Endothelial cell of umbilical vein (primary cell): ENCODE measurements at regions of chr1 and their contacts with region 1.

Region 1: DNA sequence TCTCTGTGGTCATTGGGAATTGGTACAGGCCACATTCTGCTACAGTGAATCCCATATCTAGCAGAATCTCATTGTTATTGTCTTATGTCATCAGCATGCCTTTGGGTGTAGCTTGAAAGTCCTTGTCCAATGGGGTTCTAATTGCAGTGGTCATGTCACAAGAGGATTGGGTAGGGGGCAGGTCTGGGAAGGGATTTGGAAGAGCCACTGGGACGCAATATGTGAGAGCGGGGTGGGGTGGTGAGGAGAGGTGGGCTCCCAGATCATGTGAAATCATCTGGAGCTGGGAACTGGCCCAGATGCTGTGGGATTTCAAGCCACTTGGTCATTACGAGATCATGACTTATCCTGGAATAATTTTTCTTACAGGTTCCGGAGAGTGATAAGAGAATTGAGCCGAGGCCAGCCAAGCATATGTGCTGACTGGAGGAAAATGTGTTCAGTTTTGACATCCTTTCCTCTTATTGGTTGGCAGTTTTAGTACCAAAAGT is 16.3 kb downstream of the CNIH3 start:
- DNase-seq: peak; percentile 74
- H3K4me3 ChIP-seq: no peak overlapping the region
- H3K27ac ChIP-seq: peak overlapping the region; percentile 47
- H3K4me1 ChIP-seq: peaks cover 10% of the 10 kb centered on the region
- H3K27me3 ChIP-seq: no peaks in the 10 kb centered on the region
- CTCF ChIP-seq: no peak
- POLR2A ChIP-seq: no peak

Region 2: DNA sequence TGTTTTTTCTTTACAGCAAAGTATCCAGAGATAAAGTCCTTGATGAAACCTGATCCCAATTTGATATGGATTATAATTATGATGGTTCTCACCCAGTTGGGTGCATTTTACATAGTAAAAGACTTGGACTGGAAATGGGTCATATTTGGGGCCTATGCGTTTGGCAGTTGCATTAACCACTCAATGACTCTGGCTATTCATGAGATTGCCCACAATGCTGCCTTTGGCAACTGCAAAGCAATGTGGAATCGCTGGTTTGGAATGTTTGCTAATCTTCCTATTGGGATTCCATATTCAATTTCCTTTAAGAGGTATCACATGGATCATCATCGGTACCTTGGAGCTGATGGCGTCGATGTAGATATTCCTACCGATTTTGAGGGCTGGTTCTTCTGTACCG is 442.9 kb before region 1 on chr1:
- CTCF ChIA-PET with region 1: no interaction called
- POLR2A ChIA-PET with region 1: no interaction called
- dilution Hi-C with region 1: no loop called
- intact Hi-C with region 1: loop called (anchors 5 kb)
- DNase-seq: no peak
- H3K4me3 ChIP-seq: no peak overlapping the region
- H3K27ac ChIP-seq: no peak overlapping the region
- H3K4me1 ChIP-seq: no peaks in the 10 kb centered on the region
- H3K27me3 ChIP-seq: no peaks in the 10 kb centered on the region
- CTCF ChIP-seq: no peak
- POLR2A ChIP-seq: no peak

Region 3: GRCh38 chr1:224245188-224245587 is 387.2 kb before region 1 on chr1:
- CTCF ChIA-PET with region 1: no interaction called
- POLR2A ChIA-PET with region 1: no interaction called
- dilution Hi-C with region 1: no loop called
- intact Hi-C with region 1: no loop called
- DNase-seq: peak; percentile 99
- H3K4me3 ChIP-seq: no peak overlapping the region
- H3K27ac ChIP-seq: peak overlapping the region; percentile 57
- H3K4me1 ChIP-seq: peaks cover 15% of the 10 kb centered on the region
- H3K27me3 ChIP-seq: no peaks in the 10 kb centered on the region
- CTCF ChIP-seq: no peak
- POLR2A ChIP-seq: peak; percentile 81

Region 4: DNA sequence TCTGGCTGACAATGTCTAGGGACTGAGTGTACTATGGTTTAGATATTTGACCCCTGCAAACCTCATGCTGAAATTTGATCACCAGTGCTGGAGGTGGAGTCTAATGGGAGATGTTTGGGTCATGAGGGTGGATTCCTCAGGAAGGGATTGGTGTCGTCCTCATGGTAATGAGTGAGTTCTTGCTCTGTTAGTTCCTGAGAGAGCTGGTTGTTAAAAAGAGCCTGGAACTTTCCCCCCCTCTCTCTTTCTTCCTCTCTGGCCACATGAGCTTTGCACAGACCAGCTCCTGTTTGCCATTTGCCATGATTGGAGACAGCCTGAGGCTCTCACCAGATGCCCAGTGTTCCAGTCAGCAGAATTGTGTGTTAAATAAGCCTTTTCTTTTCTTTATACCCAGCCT is 52.9 kb before region 1 on chr1:
- CTCF ChIA-PET with region 1: no interaction called
- POLR2A ChIA-PET with region 1: no interaction called
- dilution Hi-C with region 1: no loop called
- intact Hi-C with region 1: no loop called
- DNase-seq: no peak
- H3K4me3 ChIP-seq: no peak overlapping the region
- H3K27ac ChIP-seq: no peak overlapping the region
- H3K4me1 ChIP-seq: no peaks in the 10 kb centered on the region
- H3K27me3 ChIP-seq: no peaks in the 10 kb centered on the region
- CTCF ChIP-seq: no peak
- POLR2A ChIP-seq: no peak

Region 5: DNA sequence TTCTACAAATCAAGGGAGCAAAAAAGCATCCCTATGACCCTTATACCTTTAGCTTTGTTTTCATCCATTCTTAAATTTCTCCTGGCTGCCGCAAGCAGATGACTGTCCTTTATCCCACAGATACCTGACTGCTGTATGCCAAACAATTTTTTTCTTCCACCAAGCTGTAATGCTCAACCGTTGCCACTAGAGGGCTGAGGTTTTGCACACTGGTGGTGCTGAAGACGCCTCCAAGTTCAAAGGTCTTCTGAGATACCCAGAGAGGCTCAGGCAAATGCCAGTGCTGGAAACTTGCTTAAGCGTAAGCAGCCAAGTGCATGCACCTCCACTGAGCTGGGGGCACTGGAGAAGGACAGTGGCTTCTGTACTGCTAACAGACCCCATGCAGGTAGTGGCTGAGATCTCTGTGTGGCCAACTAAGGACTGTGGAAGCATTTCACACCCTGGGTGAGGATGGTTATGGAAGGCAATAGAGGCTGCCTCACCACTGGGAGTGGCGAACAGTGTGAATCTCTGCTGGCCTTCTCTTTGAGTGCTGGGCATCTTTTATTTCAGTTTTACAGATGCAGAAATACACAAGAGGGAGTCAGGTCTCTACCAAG is 12.2 kb after region 1 on chr1:
- CTCF ChIA-PET with region 1: interaction called, 14 read pairs
- POLR2A ChIA-PET with region 1: no interaction called
- dilution Hi-C with region 1: no loop called
- intact Hi-C with region 1: no loop called
- DNase-seq: peak; percentile 54
- H3K4me3 ChIP-seq: no peak overlapping the region
- H3K27ac ChIP-seq: no peak overlapping the region
- H3K4me1 ChIP-seq: peaks cover under 1% of the 10 kb centered on the region
- H3K27me3 ChIP-seq: no peaks in the 10 kb centered on the region
- CTCF ChIP-seq: peak; percentile 72 to 76
- POLR2A ChIP-seq: no peak

Region 6: DNA sequence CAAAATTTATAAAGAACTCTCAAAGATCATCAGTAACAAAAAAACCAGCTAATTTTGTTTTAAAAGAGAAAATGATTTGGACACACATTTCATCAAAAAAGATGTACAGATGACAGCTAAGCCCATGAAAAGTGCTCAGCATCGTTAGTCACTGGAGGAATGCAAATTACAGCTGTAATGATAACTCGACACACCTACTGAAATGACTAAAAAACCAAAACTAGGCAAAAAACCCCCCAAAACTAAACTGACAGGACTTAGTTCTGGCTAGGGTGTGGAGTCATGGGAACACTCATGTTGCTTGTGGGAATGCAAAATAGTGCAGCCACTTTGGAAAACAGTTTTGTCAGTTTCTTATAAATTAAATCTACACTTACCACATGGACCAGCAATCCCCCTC is 43.2 kb after region 1 on chr1:
- CTCF ChIA-PET with region 1: no interaction called
- POLR2A ChIA-PET with region 1: no interaction called
- dilution Hi-C with region 1: no loop called
- intact Hi-C with region 1: no loop called
- DNase-seq: no peak
- H3K4me3 ChIP-seq: no peak overlapping the region
- H3K27ac ChIP-seq: no peak overlapping the region
- H3K4me1 ChIP-seq: no peaks in the 10 kb centered on the region
- H3K27me3 ChIP-seq: peaks cover 0 to 6% of the 10 kb centered on the region in 2 experiments
- CTCF ChIP-seq: no peak
- POLR2A ChIP-seq: no peak